Activated naive CD4-positive, alpha-beta T cell treated with anti-CD3 and anti-CD28 coated beads for 36 hours (primary cell): ENCODE measurements at regions of chr1 and their contacts with region 1.

Region 1: GRCh38 chr1:154849645-154850131 is 20.4 kb downstream of the KCNN3 start:
- DNase-seq: peak; percentile 83
- H3K4me3 Mint-ChIP-seq: no peak overlapping the region
- H3K27ac Mint-ChIP-seq: peak overlapping the region; percentile 66
- H3K4me1 Mint-ChIP-seq: peaks cover 17% of the 10 kb centered on the region
- H3K27me3 Mint-ChIP-seq: peaks cover 5% of the 10 kb centered on the region

Region 2: DNA sequence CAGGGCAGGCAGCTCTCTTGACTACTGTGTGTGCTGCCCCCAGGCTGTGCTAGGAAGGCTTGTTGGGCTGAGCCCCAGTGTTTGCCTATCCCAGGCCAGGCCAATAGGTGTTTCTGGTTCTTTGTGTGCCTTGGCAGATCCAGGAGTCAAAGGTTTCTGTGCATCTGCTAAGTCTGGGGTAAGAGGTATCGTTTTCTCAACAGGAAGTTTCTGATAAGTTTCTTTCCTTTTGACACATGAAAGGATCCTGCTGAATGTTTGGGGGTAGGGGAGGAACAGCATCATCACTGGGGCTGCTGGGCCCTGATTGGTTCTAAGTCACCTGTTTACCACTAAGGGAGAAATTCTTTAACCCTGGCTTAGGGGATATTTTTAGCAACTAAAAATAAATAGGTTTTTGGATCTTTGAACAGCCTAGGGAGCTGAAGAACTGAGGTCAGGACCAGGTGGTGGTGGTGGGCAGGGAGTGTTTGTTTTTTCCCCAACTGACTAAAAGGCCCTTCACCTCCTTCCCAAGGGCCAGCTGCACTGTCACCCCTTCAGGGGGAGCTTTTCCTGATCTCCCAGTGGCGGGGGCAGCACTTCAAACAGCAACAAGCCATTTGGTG is 64.7 kb before region 1 on chr1:
- CTCF ChIA-PET with region 1: interaction called, 3 read pairs
- intact Hi-C with region 1: loop called (anchors 1 kb)
- DNase-seq: peak; percentile 85
- H3K4me3 Mint-ChIP-seq: peak overlapping the region; percentile 54
- H3K27ac Mint-ChIP-seq: peak overlapping the region; percentile 98
- H3K4me1 Mint-ChIP-seq: peaks cover 38% of the 10 kb centered on the region
- H3K27me3 Mint-ChIP-seq: no peaks in the 10 kb centered on the region

Region 3: GRCh38 chr1:154859786-154860155 is 10.1 kb after region 1 on chr1:
- CTCF ChIA-PET with region 1: interaction called, 3 read pairs
- intact Hi-C with region 1: loop called (anchors 1 kb)
- DNase-seq: peak; percentile 29
- H3K4me3 Mint-ChIP-seq: no peak overlapping the region
- H3K27ac Mint-ChIP-seq: peak overlapping the region; percentile 52
- H3K4me1 Mint-ChIP-seq: peaks cover 17% of the 10 kb centered on the region
- H3K27me3 Mint-ChIP-seq: peaks cover 1% of the 10 kb centered on the region